Gastrocnemius medialis (tissue), 4 donors: ENCODE measurements at regions of chr12 and their contacts with region 1.

Region 1: DNA sequence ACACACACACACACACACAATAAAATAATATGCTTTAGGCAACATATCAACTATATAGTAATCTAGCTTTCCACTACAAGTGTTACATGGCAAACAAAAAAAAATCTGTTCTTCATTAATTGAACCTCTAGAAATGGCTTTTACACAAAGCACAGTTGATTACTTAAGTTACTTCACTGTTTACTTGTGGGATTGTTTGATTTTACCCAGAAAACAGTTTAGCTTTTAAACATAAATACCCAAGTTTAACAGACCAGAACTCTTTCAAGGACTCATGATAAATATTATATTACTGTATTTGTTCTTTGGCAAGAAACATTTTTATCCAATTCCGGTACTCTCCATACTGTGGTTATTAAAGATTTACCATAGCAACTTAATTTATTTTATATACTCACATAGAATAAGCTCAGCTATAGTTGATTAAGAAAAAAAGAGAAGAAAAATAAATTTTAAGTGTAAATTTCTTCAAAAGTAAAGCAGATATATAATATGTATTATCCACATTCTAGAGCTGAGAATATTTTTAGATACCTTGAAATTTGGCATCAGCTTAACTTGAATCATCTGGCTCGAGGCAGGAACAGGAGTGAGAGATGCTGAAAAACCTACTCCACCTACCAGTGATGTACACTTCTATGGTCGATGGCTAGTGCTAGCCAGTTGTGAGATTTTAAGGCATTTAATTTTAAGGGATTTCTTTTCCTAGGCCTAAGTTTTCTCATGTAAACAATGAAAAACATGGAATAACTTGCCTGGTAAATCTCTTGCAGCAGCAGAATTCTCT is 126.0 kb downstream of the BTG1 start:
- DNase-seq: no peak
- ATAC-seq: no peak
- H3K4me3 ChIP-seq: no peak overlapping the region
- H3K27ac ChIP-seq: no peak overlapping the region
- H3K4me1 ChIP-seq: no peaks in the 10 kb centered on the region
- H3K27me3 ChIP-seq: no peaks in the 10 kb centered on the region
- CTCF ChIP-seq: no peak
- POLR2A ChIP-seq: no peak

Region 2: DNA sequence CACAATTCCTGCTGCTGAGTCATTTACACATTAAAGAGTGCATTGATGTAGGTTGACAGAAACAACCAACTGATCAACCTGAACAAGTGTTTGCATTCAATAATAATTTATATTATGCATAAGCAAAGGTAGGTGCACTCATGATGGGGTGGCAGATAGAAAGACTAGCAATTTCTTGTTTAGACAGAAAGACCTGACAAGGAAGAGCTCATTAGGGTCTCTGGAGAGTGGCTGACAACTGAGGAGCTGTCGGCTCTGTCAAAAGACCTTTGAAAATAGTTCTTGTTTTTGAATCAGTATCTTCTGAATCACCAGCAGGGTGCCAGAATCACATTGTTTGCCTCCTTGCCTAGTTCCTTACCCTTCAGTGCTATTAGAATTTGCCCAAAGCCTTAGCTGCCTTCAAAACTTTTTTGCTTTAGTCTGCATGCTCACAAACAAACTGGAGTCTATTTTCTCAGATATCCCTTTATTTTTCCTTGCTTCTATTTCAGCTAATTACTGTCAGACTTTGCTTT is 108.8 kb before region 1 on chr12:
- in situ Hi-C with region 1: no loop called
- intact Hi-C with region 1: loop called (anchors 5 kb)
- DNase-seq: no peak
- ATAC-seq: no peak
- H3K4me3 ChIP-seq: no peak overlapping the region
- H3K27ac ChIP-seq: no peak overlapping the region
- H3K4me1 ChIP-seq: no peaks in the 10 kb centered on the region
- H3K27me3 ChIP-seq: no peaks in the 10 kb centered on the region
- CTCF ChIP-seq: peak in 1 of 5 experiments; percentile 4
- POLR2A ChIP-seq: no peak

Region 3: DNA sequence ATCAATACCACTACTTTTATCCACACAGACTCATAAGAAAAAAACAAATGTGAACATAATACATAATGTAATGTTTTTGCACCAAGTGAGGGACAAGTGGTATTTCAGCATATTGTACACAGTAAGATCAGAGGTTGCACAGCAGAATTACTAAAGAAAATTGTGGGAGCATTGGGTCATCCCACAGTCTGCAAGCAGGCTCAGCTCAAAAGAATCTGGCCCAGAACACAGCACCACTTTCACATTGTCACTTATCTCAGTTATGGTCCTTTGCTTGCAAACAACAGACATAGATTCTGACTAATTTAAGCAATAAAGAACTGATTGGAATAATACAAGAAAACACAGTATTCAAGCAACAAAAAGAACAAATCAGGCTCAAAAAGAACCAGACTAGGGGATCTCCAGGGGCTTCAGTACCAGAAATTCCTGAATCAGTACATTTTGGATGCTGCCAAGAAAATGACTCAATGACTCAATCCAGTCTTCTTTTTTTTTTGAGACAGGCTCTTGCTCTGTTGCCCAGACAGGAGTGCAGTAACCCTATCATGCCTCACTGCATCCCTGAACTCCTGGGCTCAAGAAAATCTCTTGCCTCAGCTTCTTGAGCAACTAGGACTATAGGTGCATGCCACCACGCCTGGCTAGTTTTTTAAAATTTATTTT is 952.3 kb after region 1 on chr12:
- in situ Hi-C with region 1: no loop called
- intact Hi-C with region 1: no loop called
- DNase-seq: no peak
- ATAC-seq: no peak
- H3K4me3 ChIP-seq: no peak overlapping the region
- H3K27ac ChIP-seq: no peak overlapping the region
- H3K4me1 ChIP-seq: no peaks in the 10 kb centered on the region
- H3K27me3 ChIP-seq: no peaks in the 10 kb centered on the region
- CTCF ChIP-seq: no peak
- POLR2A ChIP-seq: no peak